PC-3 (cell line): ENCODE measurements at regions of chr20 and their contacts with region 1.

Region 1: DNA sequence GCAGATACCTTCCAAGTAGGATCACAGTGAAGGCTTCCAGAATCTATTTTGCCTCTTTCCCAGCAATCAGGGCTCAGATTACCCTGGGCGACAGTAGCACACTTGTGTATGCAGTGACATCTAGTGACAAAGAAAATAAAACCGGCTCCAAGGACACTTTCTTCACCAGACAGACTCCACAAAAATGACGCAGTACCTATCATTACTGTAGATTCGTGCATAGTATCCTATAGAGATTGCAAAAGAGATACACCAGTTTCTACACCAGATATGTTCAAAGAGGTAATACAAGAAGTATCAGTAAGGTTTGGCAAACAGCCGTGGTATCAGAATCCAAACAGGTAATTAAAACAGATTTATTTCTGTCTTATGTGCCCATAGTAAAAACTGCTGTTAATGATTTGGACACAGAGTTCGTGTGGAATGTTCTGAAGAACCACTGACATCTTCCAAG is 600.4 kb upstream of the JAG1 start:
- DNase-seq: peak; percentile 89
- ATAC-seq: peak; percentile 97
- H3K4me3 ChIP-seq: no peak overlapping the region
- H3K27ac ChIP-seq: no peak overlapping the region
- H3K4me1 ChIP-seq: peaks cover 7% of the 10 kb centered on the region
- H3K27me3 ChIP-seq: no peaks in the 10 kb centered on the region
- CTCF ChIP-seq: peak; percentile 93

Region 2: DNA sequence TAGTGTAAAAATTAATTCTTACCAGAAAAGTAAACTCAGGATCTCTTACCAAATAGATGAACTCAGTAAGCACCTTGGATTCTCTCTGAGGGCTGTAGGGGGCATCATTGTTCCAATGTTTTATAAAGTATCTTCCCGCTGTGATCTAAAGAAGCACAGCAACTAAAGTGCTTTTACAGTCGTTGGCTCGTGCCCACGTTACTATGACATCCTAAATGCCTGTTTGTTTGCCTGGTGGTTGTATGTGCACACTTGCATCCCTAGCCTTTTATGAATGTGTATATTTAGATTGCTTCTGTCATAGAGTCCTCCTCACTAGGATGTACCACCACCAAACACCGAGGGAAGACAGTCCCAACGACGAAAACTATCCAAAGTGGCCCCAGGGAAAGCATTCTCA is 804.6 kb before region 1 on chr20:
- CTCF ChIA-PET with region 1: no interaction called
- POLR2A ChIA-PET with region 1: no interaction called
- intact Hi-C with region 1: loop called (anchors 1 kb)
- DNase-seq: peak; percentile 87
- ATAC-seq: peak; percentile 79
- H3K4me3 ChIP-seq: no peak overlapping the region
- H3K27ac ChIP-seq: peak overlapping the region; percentile 23
- H3K4me1 ChIP-seq: peaks cover 18% of the 10 kb centered on the region
- H3K27me3 ChIP-seq: no peaks in the 10 kb centered on the region
- CTCF ChIP-seq: peak; percentile 80

Region 3: GRCh38 chr20:11020712-11021111 is 253.5 kb before region 1 on chr20:
- CTCF ChIA-PET with region 1: no interaction called
- POLR2A ChIA-PET with region 1: no interaction called
- intact Hi-C with region 1: loop called (anchors 5 kb)
- DNase-seq: peak; percentile 49
- ATAC-seq: peak; percentile 85
- H3K4me3 ChIP-seq: no peak overlapping the region
- H3K27ac ChIP-seq: 0 out of 2 replicates have a peak overlapping the region, but pooled peaks have one; percentile 4
- H3K4me1 ChIP-seq: peaks cover 12% of the 10 kb centered on the region; the same call in 1 of the 2 replicates
- H3K27me3 ChIP-seq: no peaks in the 10 kb centered on the region
- CTCF ChIP-seq: no peak

Region 4: DNA sequence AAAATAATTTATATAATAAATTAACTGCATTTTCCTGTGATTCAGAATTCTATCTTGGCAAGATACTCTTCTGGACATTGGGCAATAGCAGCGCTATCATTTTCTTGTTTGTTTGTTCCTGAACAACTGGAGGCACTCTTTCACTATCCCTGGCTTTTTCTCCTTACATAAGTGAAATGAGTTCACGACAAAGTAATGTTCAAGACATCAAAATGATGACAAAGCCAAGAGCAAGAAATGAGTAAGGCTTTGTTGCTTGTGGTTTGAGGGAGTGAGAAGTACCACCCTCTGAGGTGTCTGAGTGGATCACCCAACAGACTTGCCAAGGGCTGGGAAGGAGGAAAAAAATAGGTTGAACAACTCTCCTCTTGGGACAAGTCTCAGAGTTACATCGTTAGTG is 133.8 kb before region 1 on chr20:
- CTCF ChIA-PET with region 1: no interaction called
- POLR2A ChIA-PET with region 1: no interaction called
- intact Hi-C with region 1: loop called (anchors 1 kb)
- DNase-seq: peak; percentile 96
- ATAC-seq: peak; percentile 97
- H3K4me3 ChIP-seq: no peak overlapping the region
- H3K27ac ChIP-seq: peak overlapping the region; percentile 66
- H3K4me1 ChIP-seq: peaks cover 17% of the 10 kb centered on the region
- H3K27me3 ChIP-seq: no peaks in the 10 kb centered on the region
- CTCF ChIP-seq: peak; percentile 48; the same call in 1 of the 2 replicates

Region 5: GRCh38 chr20:11204926-11205768 is 69.0 kb before region 1 on chr20:
- CTCF ChIA-PET with region 1: no interaction called
- POLR2A ChIA-PET with region 1: interaction called, 4 read pairs
- intact Hi-C with region 1: loop called (anchors 2 kb)
- DNase-seq: peak; percentile 84
- ATAC-seq: peak; percentile 42
- H3K4me3 ChIP-seq: no peak overlapping the region
- H3K27ac ChIP-seq: no peak overlapping the region
- H3K4me1 ChIP-seq: peaks cover 51% of the 10 kb centered on the region
- H3K27me3 ChIP-seq: no peaks in the 10 kb centered on the region
- CTCF ChIP-seq: peak; percentile 96

Region 6: GRCh38 chr20:11305406-11305805 is 31.2 kb after region 1 on chr20:
- CTCF ChIA-PET with region 1: no interaction called
- POLR2A ChIA-PET with region 1: no interaction called
- intact Hi-C with region 1: no loop called
- DNase-seq: no peak
- ATAC-seq: no peak
- H3K4me3 ChIP-seq: no peak overlapping the region
- H3K27ac ChIP-seq: no peak overlapping the region
- H3K4me1 ChIP-seq: no peaks in the 10 kb centered on the region
- H3K27me3 ChIP-seq: no peaks in the 10 kb centered on the region
- CTCF ChIP-seq: no peak